ENCODE measurements at regions of chr17 and their contacts with region 1.

Region 1: GRCh38 chr17:4324463-4324862 is 42.0 kb downstream of the UBE2G1 start:
- DNase-seq: no peak
- ATAC-seq: no peak
- H3K4me3 ChIP-seq: no peak overlapping the region
- H3K4me3 Mint-ChIP-seq: no peak overlapping the region
- H3K27ac ChIP-seq: no peak overlapping the region
- H3K27ac Mint-ChIP-seq: no peak overlapping the region
- H3K4me1 ChIP-seq: no peaks in the 10 kb centered on the region
- H3K4me1 Mint-ChIP-seq: peaks cover 53% of the 10 kb centered on the region
- H3K27me3 ChIP-seq: no peaks in the 10 kb centered on the region
- H3K27me3 Mint-ChIP-seq: no peaks in the 10 kb centered on the region
- CTCF ChIP-seq: no peak

Region 2: DNA sequence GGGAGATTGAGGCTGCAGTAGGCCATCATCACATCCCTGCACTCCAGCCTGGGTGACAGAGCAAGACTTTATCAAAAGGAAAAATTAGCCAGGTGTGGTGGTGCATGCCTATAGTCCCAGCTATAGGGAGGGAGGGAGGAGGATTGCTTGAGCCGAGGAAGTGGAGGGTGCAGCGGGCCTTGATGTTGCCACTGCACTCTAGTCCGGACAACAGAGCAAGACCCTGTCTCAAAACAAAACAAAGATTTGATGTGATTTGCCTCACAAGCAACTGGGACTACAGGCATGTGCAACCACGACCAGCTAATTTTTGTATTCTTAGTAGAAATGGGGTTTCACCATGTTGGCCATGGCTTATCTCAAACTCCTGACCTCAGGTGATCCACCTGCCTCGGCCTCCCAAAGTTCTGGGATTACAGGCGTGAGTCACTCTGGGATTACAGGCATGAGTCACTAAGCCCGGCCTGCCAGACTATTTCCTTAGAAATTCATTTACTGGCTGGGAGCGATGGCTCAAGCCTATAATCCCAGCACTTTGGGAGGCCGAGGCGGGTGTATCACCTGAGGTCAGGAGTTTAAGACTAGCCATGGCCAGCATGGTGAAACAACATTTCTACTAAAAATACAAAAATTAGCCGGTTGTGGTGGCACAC is 30.5 kb after region 1 on chr17:
- CTCF ChIA-PET with region 1: no interaction called
- POLR2A ChIA-PET with region 1: no interaction called
- intact Hi-C with region 1: loop called (anchors 5 kb)
- DNase-seq: no peak
- ATAC-seq: no peak
- H3K4me3 ChIP-seq: no peak overlapping the region
- H3K4me3 Mint-ChIP-seq: no peak overlapping the region
- H3K27ac ChIP-seq: no peak overlapping the region
- H3K27ac Mint-ChIP-seq: peak overlapping the region; percentile 41
- H3K4me1 ChIP-seq: peaks cover 27 to 46% of the 10 kb centered on the region in 2 donors
- H3K4me1 Mint-ChIP-seq: peaks cover 57% of the 10 kb centered on the region
- H3K27me3 ChIP-seq: no peaks in the 10 kb centered on the region
- H3K27me3 Mint-ChIP-seq: no peaks in the 10 kb centered on the region
- CTCF ChIP-seq: no peak

Measured in B cell (primary cell).